Activated T-helper 1 cell treated with anti-CD3 and anti-CD28 coated beads, Interleukin-12 subunit alpha, Interleukin-12 subunit beta, Interleukin-2, Interleukin-4 antibody, amounts not matched to agents 30 ng/mL and 10 ng/mL and 1 ng/mL, durations not matched to agents 14 hours and 24 hours and 36 hours (primary cell): ENCODE measurements at regions of chr1 and their contacts with region 1.

Region 1: DNA sequence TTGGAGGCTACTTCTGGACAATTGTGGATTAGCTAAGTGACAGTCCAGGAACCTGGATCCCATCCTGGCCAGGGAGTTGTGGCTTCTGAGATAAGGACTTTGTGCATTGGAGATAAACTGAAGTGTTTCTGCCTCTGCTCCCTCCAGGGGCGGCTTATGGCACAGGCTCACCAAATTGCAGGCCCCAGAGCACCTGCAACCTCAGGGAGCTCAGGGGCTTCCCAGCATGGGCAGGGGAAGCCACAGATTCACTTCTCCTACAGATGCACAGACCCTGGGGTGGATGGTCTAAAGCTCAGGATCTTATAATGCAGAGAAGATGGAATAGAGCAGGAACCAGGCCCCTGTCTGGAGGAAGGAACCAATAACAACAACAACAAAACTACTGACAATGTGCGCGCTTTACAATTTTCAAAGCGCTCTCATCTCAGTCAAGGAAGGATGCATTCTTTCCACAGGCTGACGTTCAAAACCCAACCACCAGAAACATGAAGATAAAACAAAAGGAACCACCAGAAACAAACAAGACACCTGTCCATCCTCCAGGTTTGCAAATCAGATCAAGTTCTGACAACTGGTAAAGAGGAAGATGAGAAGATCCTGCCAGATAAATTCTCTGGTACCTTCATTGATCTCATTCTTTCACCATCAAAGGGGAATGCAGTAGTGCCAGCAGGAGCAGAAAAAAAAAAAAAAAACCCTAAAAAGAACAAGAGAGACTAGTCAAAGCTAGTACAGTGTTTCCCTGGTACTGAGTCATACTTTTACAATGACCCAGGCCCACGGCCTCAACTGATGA is 121.0 kb upstream of the IRF2BP2 start:
- DNase-seq: peak; percentile 49
- H3K4me3 Mint-ChIP-seq: peak overlapping the region; percentile 55
- H3K27ac Mint-ChIP-seq: peak overlapping the region; percentile 97
- H3K4me1 Mint-ChIP-seq: peaks cover 75% of the 10 kb centered on the region
- H3K27me3 Mint-ChIP-seq: no peaks in the 10 kb centered on the region

Region 2: GRCh38 chr1:234499119-234499942 is 231.6 kb before region 1 on chr1:
- intact Hi-C with region 1: loop called (anchors 1 kb)
- DNase-seq: peak; percentile 78
- H3K4me3 Mint-ChIP-seq: no peak overlapping the region
- H3K27ac Mint-ChIP-seq: peak overlapping the region; percentile 80
- H3K4me1 Mint-ChIP-seq: peaks cover 83% of the 10 kb centered on the region
- H3K27me3 Mint-ChIP-seq: no peaks in the 10 kb centered on the region

Region 3: GRCh38 chr1:234772345-234773147 is 41.6 kb after region 1 on chr1:
- intact Hi-C with region 1: loop called (anchors 1 kb)
- DNase-seq: peak; percentile 83
- H3K4me3 Mint-ChIP-seq: peak overlapping the region; percentile 80
- H3K27ac Mint-ChIP-seq: peak overlapping the region; percentile 100
- H3K4me1 Mint-ChIP-seq: peaks cover 56% of the 10 kb centered on the region
- H3K27me3 Mint-ChIP-seq: no peaks in the 10 kb centered on the region

Region 4: GRCh38 chr1:234925440-234926263 is 194.7 kb after region 1 on chr1:
- intact Hi-C with region 1: loop called (anchors 1 kb)
- DNase-seq: peak; percentile 17
- H3K4me3 Mint-ChIP-seq: peak overlapping the region; percentile 74
- H3K27ac Mint-ChIP-seq: peak overlapping the region; percentile 97
- H3K4me1 Mint-ChIP-seq: peaks cover 64% of the 10 kb centered on the region
- H3K27me3 Mint-ChIP-seq: no peaks in the 10 kb centered on the region

Region 5: GRCh38 chr1:234987415-234988154 is 256.6 kb after region 1 on chr1:
- intact Hi-C with region 1: loop called (anchors 1 kb)
- DNase-seq: no peak
- H3K4me3 Mint-ChIP-seq: peak overlapping the region; percentile 53
- H3K27ac Mint-ChIP-seq: peak overlapping the region; percentile 95
- H3K4me1 Mint-ChIP-seq: peaks cover 83% of the 10 kb centered on the region
- H3K27me3 Mint-ChIP-seq: no peaks in the 10 kb centered on the region

Region 6: GRCh38 chr1:235050911-235051360 is 320.0 kb after region 1 on chr1:
- intact Hi-C with region 1: loop called (anchors 1 kb)
- DNase-seq: no peak
- H3K4me3 Mint-ChIP-seq: no peak overlapping the region
- H3K27ac Mint-ChIP-seq: peak overlapping the region; percentile 78
- H3K4me1 Mint-ChIP-seq: peaks cover 49% of the 10 kb centered on the region
- H3K27me3 Mint-ChIP-seq: no peaks in the 10 kb centered on the region